AG04450 (cell line): ENCODE measurements at regions of chr6 and their contacts with region 1.

Region 1: DNA sequence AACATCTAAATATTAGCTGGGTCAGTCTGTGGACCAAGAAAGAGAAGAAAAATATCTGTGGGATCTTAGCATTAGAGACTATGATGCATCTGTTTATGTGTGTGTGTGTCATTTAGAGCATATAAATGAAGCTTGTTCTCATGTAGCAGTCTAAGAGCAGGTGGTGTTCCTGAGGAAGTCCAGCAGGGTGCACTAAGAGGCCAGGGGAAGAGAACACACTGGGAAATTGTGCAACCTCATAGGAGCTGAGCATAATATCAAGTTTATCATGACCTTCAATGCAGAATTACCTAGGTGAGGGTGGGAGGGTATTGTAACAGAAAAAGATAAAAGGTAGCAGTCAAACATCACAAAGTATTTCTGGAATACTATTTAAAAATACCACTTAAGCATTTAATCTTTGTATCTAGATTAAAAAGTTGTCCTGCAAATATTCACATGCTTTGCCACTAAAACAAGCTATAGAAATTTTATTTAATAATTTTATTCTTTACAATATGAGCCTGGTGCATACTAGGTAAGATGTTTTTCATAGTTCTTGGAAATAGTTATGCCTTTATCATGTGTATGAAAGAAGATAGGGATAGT is 80.5 kb downstream of the SMPDL3A start:
- DNase-seq: peak; percentile 8
- H3K4me3 ChIP-seq: no peak overlapping the region
- H3K27ac ChIP-seq: no peak overlapping the region
- H3K27me3 ChIP-seq: no peaks in the 10 kb centered on the region
- CTCF ChIP-seq: peak; percentile 68

Region 2: GRCh38 chr6:123118593-123119228 is 249.2 kb after region 1 on chr6:
- CTCF ChIA-PET with region 1: no interaction called
- POLR2A ChIA-PET with region 1: no interaction called
- DNase-seq: no peak
- H3K4me3 ChIP-seq: no peak overlapping the region
- H3K27ac ChIP-seq: no peak overlapping the region
- H3K27me3 ChIP-seq: no peaks in the 10 kb centered on the region
- CTCF ChIP-seq: no peak

Region 3: DNA sequence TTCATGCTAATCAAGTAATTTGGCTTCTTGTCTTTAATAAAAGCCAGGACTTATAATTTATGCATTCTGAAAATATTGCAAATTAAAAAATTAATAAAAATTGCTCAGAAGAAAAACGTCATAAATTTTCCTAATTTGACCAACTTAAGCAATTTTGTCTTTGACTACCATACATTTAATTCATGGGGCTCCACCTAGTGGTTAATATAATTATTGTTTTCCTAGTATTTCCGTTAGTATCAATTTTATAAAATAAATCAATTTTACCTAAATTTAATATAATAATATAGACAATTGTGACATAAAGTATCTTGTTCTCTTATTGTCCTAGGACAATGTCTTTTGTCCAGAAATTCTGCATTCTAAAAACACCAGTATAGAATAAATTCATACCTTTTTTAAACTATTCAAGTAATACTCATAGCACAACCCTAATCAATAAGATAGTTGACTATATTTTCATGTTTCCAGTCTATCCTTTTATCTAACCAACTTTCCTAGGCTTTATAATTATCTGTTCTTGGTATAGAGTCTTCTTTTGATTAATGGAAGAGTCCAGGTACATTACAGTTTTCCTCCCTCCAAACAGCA is 447.3 kb after region 1 on chr6:
- CTCF ChIA-PET with region 1: interaction called, 48 read pairs
- POLR2A ChIA-PET with region 1: no interaction called
- DNase-seq: no peak
- H3K4me3 ChIP-seq: no peak overlapping the region
- H3K27ac ChIP-seq: no peak overlapping the region
- H3K27me3 ChIP-seq: no peaks in the 10 kb centered on the region
- CTCF ChIP-seq: peak; percentile 53

Region 4: DNA sequence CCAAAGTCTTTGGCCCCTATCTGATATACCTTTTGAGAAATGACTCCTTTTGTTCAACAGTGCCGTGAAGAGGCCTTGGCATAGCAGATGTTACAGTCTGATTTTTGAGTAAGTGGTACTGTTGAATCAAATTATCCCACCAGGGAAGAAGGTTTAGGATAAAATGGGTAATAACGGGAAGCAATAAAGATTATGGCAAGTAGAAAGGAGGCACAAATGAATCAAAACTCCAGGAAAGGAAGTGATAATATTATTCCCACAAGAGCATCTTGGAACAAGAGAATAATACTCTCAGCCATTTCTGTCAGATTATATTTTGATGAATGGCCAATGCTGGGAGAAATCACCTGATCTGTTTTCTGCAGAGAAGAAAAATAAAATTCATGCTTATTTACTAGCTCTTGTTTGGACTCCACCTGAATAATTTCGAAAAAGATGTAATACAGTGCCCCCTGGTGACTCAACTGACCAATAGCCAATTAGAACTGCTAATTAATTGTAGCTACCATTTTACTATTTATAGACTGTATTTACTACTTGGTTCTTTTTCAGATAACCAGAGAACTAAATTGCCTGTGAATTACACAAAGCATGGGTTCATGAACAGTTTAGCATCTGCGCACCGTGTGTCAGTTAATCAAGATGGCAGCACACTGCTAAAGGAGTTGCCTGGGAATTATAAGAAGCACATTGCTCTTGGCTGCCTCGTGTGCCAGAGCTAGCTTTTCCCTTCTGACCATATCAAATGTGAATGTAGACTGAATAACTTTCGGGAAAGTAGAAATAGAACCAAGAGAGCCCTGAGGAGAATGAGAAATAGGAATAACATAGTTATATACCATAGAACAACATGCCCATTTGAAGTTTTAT is 845.7 kb after region 1 on chr6:
- CTCF ChIA-PET with region 1: interaction called, 12 read pairs
- POLR2A ChIA-PET with region 1: no interaction called
- DNase-seq: no peak
- H3K4me3 ChIP-seq: no peak overlapping the region
- H3K27ac ChIP-seq: no peak overlapping the region
- H3K27me3 ChIP-seq: no peaks in the 10 kb centered on the region
- CTCF ChIP-seq: peak; percentile 33